Activated naive CD8-positive, alpha-beta T cell treated with anti-CD3 and anti-CD28 coated beads, Interleukin-2, amount 10 ng/mL, durations not matched to agents 7 days and 5 days (primary cell): ENCODE measurements at regions of chr11 and their contacts with region 1.

Region 1: GRCh38 chr11:64317957-64318693 is at the start of gene PRDX5:
- DNase-seq: peak; percentile 97
- ATAC-seq: peak; percentile 82
- H3K4me3 Mint-ChIP-seq: peak within 1 kb of the TSS; percentile 87
- H3K27ac Mint-ChIP-seq: peak within 1 kb of the TSS; percentile 97
- H3K4me1 Mint-ChIP-seq: peaks cover 23% of the 10 kb centered on the region
- H3K27me3 Mint-ChIP-seq: no peaks in the 10 kb centered on the region
- total RNA-seq, gene PRDX5: 85.1 to 91.2 TPM

Region 2: GRCh38 chr11:64185816-64186498 is 132.2 kb before region 1 on chr11 and contains the start of gene STIP1:
- POLR2A ChIA-PET with region 1: interaction called, 18 read pairs
- DNase-seq: peak; percentile 95
- ATAC-seq: peak; percentile 92
- H3K4me3 Mint-ChIP-seq: peak within 1 kb of the TSS; percentile 99
- H3K27ac Mint-ChIP-seq: peak within 1 kb of the TSS; percentile 100
- H3K4me1 Mint-ChIP-seq: peaks cover 38% of the 10 kb centered on the region
- H3K27me3 Mint-ChIP-seq: no peaks in the 10 kb centered on the region
- total RNA-seq, gene STIP1: 218 to 219 TPM

Region 3: DNA sequence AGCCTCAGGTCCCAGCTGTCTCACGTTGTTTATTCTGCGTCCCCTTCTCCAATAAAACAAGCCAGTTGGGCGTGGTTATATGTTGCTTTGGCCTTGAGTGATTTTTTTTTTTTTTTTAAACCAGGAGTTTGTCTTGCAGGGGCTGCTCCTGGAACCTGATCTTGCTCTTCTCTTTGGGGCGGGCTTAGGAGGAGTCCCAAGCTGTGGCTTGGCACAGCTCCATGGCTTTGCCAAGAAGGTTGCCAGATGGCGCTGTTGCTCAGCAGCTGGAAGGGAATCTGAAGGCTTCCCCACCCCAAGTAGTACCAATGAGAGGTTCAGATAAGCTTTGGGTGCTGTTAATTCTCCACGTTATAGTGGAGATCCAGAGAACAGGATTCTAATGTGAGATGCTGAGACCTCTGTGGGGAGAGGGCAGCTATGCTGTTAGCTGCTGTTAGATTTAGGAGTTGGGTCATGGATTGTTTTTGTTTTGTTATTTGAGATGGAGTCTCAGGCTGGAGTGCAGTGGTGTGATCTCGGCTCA is 113.6 kb before region 1 on chr11:
- POLR2A ChIA-PET with region 1: interaction called, 23 read pairs
- DNase-seq: peak; percentile 76
- ATAC-seq: peak; percentile 39
- H3K4me3 Mint-ChIP-seq: peak overlapping the region; percentile 67
- H3K27ac Mint-ChIP-seq: peak overlapping the region; percentile 87
- H3K4me1 Mint-ChIP-seq: peaks cover 34% of the 10 kb centered on the region
- H3K27me3 Mint-ChIP-seq: no peaks in the 10 kb centered on the region

Region 4: GRCh38 chr11:64225612-64226506 is 92.3 kb before region 1 on chr11 and contains the starts of genes NUDT22 and TRPT1:
- POLR2A ChIA-PET with region 1: interaction called, 11 read pairs
- DNase-seq: peak; percentile 98
- ATAC-seq: peak; percentile 48
- H3K4me3 Mint-ChIP-seq: peak within 1 kb of the TSS; percentile 92
- H3K27ac Mint-ChIP-seq: peak within 1 kb of the TSS; percentile 88
- H3K4me1 Mint-ChIP-seq: peaks cover 24% of the 10 kb centered on the region
- H3K27me3 Mint-ChIP-seq: no peaks in the 10 kb centered on the region
- total RNA-seq, gene NUDT22: 102 to 103 TPM
- total RNA-seq, gene TRPT1: 45.0 to 47.8 TPM

Region 5: DNA sequence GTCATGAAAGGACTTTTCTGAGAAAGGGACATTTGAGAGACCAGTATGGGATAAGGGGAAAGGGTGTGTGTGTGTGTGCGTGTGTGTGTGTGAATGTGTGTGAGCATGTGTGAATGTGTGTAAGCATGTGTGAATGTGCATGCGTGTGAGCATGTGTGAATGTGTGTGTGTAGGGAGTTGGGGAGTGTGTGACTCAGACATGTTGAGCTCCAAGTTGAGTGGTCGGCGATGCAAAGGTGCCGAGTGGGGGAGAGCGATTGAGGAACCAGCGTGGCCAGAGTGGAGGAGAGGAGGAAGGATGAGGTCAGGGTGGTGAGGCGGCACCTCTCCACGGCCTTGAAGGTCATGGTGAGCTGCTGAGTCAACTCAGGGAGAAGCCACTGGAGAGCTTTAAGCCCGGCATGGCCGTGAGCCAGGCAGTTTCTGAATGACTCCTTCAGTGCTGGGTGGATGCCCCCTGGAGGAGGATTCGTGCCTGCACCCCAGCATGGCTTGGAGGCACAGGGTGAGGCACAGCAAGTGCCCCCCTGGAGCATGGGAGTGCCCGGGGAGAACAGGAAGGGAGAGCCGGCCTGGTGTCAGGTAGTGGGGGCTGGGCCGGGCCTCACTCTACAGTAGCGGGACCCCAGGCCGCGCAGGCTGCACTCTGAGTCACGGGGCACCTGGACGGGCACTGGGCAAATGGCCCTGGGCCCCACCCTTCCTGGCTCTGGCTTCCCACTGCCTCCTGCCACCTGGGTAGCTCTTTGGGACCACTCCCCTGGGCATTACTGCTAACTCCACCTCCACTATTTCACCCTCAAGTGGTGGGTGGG is 13.6 kb after region 1 on chr11:
- POLR2A ChIA-PET with region 1: interaction called, 38 read pairs
- DNase-seq: peak; percentile 80
- ATAC-seq: peak; percentile 93
- H3K4me3 Mint-ChIP-seq: peak overlapping the region; percentile 53
- H3K27ac Mint-ChIP-seq: peak overlapping the region; percentile 93
- H3K4me1 Mint-ChIP-seq: peaks cover 17% of the 10 kb centered on the region
- H3K27me3 Mint-ChIP-seq: peaks cover 2% of the 10 kb centered on the region

Region 6: DNA sequence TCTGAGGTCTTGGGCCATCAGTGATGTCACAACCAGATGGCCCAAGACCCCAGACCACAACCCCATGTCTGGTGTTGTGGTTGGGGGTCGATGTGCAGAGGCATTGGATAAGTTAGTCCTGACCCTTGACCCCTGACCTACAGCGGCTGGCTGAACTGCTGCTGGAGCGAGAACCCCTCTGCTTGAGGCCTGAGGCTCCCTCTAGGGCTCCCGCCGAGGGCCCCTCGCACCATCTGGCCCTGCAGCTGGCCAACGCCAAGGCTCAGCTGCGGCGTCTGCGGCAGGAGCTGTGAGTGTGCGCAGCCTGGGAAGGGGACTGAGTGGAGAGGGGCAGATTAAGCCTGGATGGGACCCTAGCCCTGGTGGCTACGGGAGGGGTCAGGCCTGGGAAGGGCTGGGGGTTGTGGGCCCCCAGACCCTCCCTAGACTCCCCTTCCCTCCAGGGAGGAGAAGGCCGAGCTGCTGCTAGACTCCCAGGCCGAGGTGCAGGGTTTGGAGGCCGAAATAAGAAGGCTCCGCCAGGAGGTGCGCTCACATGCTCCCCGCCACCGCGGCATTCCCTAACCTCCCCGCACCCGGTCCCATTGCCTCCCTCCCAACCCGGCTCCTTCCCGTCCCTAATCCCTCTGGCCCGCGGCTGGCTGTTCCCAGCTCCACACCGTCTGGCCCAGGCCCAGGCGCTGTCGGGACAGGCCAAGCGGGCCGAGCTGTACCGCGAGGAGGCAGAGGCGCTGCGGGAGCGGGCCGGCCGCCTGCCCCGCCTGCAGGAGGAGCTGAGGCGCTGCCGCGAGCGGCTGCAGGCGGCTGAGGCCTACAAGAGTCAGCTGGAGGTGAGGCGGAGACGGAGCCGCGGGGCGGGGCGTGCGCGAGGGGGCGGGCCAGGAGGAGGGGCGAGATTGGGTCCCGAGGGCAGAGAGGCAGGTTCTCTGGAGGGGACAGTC is 24.0 kb after region 1 on chr11:
- POLR2A ChIA-PET with region 1: interaction called, 53 read pairs
- DNase-seq: peak; percentile 97
- ATAC-seq: peak; percentile 67
- H3K4me3 Mint-ChIP-seq: peak overlapping the region; percentile 94
- H3K27ac Mint-ChIP-seq: peak overlapping the region; percentile 61
- H3K4me1 Mint-ChIP-seq: peaks cover 41% of the 10 kb centered on the region
- H3K27me3 Mint-ChIP-seq: no peaks in the 10 kb centered on the region

Region 7: GRCh38 chr11:64358907-64359711 is 41.0 kb after region 1 on chr11 and contains the start of gene RPS6KA4:
- POLR2A ChIA-PET with region 1: interaction called, 17 read pairs
- DNase-seq: peak; percentile 79
- ATAC-seq: peak; percentile 78
- H3K4me3 Mint-ChIP-seq: peak within 1 kb of the TSS; percentile 92
- H3K27ac Mint-ChIP-seq: peak within 1 kb of the TSS; percentile 70
- H3K4me1 Mint-ChIP-seq: peaks cover 24% of the 10 kb centered on the region
- H3K27me3 Mint-ChIP-seq: no peaks in the 10 kb centered on the region
- total RNA-seq, gene RPS6KA4: 32.4 to 33.9 TPM